A673 (cell line): ENCODE measurements at regions of chr10 and their contacts with region 1.

Region 1: GRCh38 chr10:130623680-130624267 is 487.6 kb downstream of the GLRX3 start:
- DNase-seq: no peak
- H3K4me3 ChIP-seq: no peak overlapping the region
- H3K27ac ChIP-seq: no peak overlapping the region
- H3K4me1 ChIP-seq: no peaks in the 10 kb centered on the region
- H3K27me3 ChIP-seq: no peaks in the 10 kb centered on the region
- CTCF ChIP-seq: no peak

Region 2: DNA sequence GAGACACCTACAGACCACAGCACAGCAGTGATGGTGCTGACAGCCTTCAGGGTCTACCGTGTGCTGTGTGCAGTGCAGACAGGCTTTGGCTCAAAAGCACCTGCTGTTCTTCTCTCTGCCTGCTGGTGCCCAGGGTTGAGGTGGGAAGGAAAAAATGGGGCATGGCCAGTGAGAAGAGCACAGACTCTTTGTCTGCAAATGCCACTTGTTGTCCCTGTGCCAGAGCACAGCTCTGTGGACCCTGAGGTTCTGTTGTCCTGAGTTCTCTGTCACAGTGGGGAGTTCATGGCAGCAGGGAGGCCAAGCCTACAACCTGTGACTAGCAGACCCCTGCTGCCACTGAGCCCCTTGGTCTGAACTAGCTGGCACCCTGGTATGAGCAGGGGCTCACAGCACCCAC is 110.8 kb before region 1 on chr10:
- CTCF ChIA-PET with region 1: no interaction called
- POLR2A ChIA-PET with region 1: no interaction called
- intact Hi-C with region 1: no loop called
- DNase-seq: no peak
- H3K4me3 ChIP-seq: no peak overlapping the region
- H3K27ac ChIP-seq: no peak overlapping the region
- H3K4me1 ChIP-seq: no peaks in the 10 kb centered on the region
- H3K27me3 ChIP-seq: peaks cover 11% of the 10 kb centered on the region
- CTCF ChIP-seq: no peak

Region 3: DNA sequence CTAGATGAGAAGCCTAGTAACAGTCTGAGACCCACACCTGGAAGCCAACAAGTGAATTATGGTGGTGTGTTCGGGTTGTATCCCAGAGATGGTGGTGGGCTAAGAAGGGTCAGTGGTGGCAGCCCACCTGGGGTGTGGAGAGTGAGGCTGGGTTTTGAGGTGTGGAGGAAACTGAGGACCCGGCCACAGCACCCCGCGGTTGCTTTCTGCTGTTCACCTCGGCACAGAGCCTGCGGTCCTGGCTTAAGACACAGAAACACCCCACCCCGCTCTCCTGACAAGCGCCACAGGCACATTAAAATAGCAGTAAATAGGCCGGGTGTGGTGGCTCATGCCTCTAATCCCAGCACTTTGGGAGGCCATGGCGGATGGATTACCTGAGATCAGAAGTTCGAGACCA is 92.5 kb before region 1 on chr10:
- CTCF ChIA-PET with region 1: no interaction called
- POLR2A ChIA-PET with region 1: no interaction called
- intact Hi-C with region 1: no loop called
- DNase-seq: no peak
- H3K4me3 ChIP-seq: no peak overlapping the region
- H3K27ac ChIP-seq: no peak overlapping the region
- H3K4me1 ChIP-seq: no peaks in the 10 kb centered on the region
- H3K27me3 ChIP-seq: peaks cover 15% of the 10 kb centered on the region
- CTCF ChIP-seq: no peak

Region 4: DNA sequence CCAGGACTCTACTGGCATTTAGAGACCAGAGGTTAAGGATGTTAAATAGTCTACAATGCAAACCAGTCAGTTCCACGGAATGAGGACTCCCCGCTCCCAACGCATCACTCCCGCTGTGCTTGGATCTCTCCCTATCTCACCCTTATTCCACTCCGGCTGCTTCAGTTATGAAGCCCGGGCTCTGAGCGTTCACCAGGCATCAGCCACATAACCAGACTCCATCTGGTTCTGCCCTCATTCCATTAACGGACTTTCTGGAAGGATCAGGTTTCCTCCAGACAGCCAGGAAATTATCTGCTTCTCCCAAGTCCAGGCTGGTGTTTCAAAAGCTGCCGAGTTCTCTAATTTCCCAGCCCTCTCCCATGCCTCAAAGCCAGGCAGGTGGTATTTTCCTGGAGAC is 11.8 kb after region 1 on chr10:
- CTCF ChIA-PET with region 1: no interaction called
- POLR2A ChIA-PET with region 1: no interaction called
- intact Hi-C with region 1: no loop called
- DNase-seq: no peak
- H3K4me3 ChIP-seq: no peak overlapping the region
- H3K27ac ChIP-seq: no peak overlapping the region
- H3K4me1 ChIP-seq: peaks cover 27% of the 10 kb centered on the region
- H3K27me3 ChIP-seq: no peaks in the 10 kb centered on the region
- CTCF ChIP-seq: no peak

Region 5: GRCh38 chr10:131083915-131084790 is 460.4 kb after region 1 on chr10:
- CTCF ChIA-PET with region 1: no interaction called
- POLR2A ChIA-PET with region 1: no interaction called
- intact Hi-C with region 1: loop called (anchors 5 kb)
- DNase-seq: peak; percentile 36
- H3K4me3 ChIP-seq: no peak overlapping the region
- H3K27ac ChIP-seq: no peak overlapping the region
- H3K4me1 ChIP-seq: no peaks in the 10 kb centered on the region
- H3K27me3 ChIP-seq: no peaks in the 10 kb centered on the region
- CTCF ChIP-seq: peak; percentile 54